PC-9 (cell line): ENCODE measurements at regions of chr9 and their contacts with region 1.

Region 1: GRCh38 chr9:127937388-127938280 is at the start of gene DPM2:
- DNase-seq: peak; percentile 74 to 77
- H3K4me3 ChIP-seq: peak within 1 kb of the TSS; percentile 83
- H3K27ac ChIP-seq: peak within 1 kb of the TSS; percentile 25; the same call in 1 of the 2 replicates
- H3K4me1 ChIP-seq: peaks cover 17% of the 10 kb centered on the region
- H3K27me3 ChIP-seq: no peaks in the 10 kb centered on the region
- CTCF ChIP-seq: no peak
- total RNA-seq, gene DPM2: 65.5 and 79.4 TPM in 2 replicates

Region 2: GRCh38 chr9:128001779-128002298 is 64.2 kb after region 1 on chr9:
- CTCF ChIA-PET with region 1: interaction called, 11 read pairs
- POLR2A ChIA-PET with region 1: interaction called, 4 read pairs
- intact Hi-C with region 1: no loop called
- DNase-seq: peak; percentile 95 to 97
- H3K4me3 ChIP-seq: peak overlapping the region; percentile 33; the same call in 1 of the 2 replicates
- H3K27ac ChIP-seq: peak overlapping the region; percentile 99
- H3K4me1 ChIP-seq: peaks cover 67% of the 10 kb centered on the region
- H3K27me3 ChIP-seq: no peaks in the 10 kb centered on the region
- CTCF ChIP-seq: no peak